PC-3 (cell line): ENCODE measurements at regions of chr13 and their contacts with region 1.

Region 1: DNA sequence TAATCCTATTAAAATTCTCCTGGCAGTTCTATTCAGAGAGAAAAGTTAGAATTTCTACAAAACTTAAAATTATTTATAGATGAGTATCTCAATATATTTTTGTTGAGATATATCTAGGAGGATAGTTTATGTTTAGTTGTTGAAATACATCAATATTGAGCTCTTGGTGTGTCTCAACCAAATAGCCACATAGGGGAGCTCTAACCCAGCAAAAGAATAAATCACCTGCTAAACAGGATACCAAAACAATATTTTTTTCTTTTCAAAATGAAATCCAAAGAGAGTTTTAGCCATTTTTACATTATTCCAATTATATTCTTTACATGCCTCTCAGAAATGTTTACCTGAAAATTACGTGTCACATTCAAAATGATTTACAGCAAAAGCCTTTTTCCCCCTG is 954.7 kb downstream of the SLITRK6 start:
- DNase-seq: peak; percentile 48
- ATAC-seq: peak; percentile 59; the same call in 1 of the 2 replicates
- H3K4me3 ChIP-seq: no peak overlapping the region
- H3K27ac ChIP-seq: no peak overlapping the region
- H3K4me1 ChIP-seq: peaks cover 9% of the 10 kb centered on the region
- H3K27me3 ChIP-seq: no peaks in the 10 kb centered on the region
- CTCF ChIP-seq: peak; percentile 70

Region 2: DNA sequence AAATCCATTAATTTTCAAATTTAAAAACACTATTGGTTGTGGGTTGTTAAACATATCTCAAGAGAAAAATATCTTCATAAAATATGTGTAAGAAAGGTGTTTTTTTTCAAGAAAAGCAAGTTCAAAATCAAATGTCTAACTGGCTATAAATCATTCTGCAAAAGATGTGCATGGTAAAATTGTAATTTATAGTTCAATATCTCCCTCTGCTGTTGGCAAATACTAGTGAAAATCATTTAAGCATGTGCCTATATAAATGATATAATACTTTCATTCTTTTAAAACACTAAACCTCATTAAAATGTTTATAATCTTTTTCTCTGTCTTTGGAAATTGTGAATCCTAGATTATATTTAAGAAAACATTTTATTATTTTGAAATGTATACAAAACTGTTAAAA is 971.9 kb after region 1 on chr13:
- CTCF ChIA-PET with region 1: no interaction called
- POLR2A ChIA-PET with region 1: no interaction called
- intact Hi-C with region 1: loop called (anchors 1 kb)
- DNase-seq: peak; percentile 56
- ATAC-seq: no peak
- H3K4me3 ChIP-seq: no peak overlapping the region
- H3K27ac ChIP-seq: no peak overlapping the region
- H3K4me1 ChIP-seq: no peaks in the 10 kb centered on the region
- H3K27me3 ChIP-seq: no peaks in the 10 kb centered on the region
- CTCF ChIP-seq: peak; percentile 58

Region 3: GRCh38 chr13:85864963-85865530 is 1020.6 kb after region 1 on chr13:
- CTCF ChIA-PET with region 1: interaction called, 8 read pairs
- POLR2A ChIA-PET with region 1: no interaction called
- intact Hi-C with region 1: loop called (anchors 1 kb)
- DNase-seq: peak; percentile 52
- ATAC-seq: peak; percentile 57; the same call in 1 of the 2 replicates
- H3K4me3 ChIP-seq: no peak overlapping the region
- H3K27ac ChIP-seq: no peak overlapping the region
- H3K4me1 ChIP-seq: no peaks in the 10 kb centered on the region
- H3K27me3 ChIP-seq: no peaks in the 10 kb centered on the region
- CTCF ChIP-seq: peak; percentile 52